Naive thymus-derived CD4-positive, alpha-beta T cell (primary cell): ENCODE measurements at regions of chr5 and their contacts with region 1.

Region 1: DNA sequence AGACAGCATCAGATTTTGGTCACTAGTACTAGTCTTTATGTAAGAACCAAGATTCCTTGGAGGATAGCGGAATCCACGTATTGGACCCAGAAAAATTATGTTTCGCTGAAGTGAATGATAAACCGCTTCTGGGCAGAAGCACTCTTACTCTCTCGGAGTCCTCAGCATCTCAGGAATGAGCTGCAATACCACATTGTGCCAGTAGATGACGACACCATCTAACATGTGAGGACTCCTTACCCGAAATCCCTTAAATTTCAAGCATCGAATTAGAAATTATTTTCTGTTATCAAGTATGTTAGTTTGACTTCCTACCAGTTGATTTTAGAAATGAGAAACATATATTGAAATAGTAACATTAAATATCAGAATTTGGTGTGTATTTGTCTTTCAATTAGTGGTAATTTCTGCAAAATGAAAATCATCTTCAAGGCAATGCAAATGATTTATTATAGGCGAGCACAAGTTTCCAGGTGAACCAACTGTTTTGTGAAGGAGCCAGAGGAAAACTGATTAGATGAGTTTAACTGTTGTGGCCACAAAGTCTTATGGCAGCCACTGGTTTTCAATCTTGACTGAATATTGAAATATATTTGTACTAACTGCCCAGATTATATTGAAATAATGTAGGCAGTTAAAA is 66.0 kb upstream of the CAMK4 start:
- DNase-seq: peak; percentile 46 to 79 (median 70)
- ATAC-seq: peak; percentile 91
- H3K4me3 ChIP-seq: no peak overlapping the region
- H3K4me3 Mint-ChIP-seq: no peak overlapping the region
- H3K27ac ChIP-seq: no peak overlapping the region
- H3K27ac Mint-ChIP-seq: no peak overlapping the region
- H3K4me1 ChIP-seq: no peaks in the 10 kb centered on the region
- H3K4me1 Mint-ChIP-seq: peaks cover 0 to 10% (median 0%) of the 10 kb centered on the region in 7 donors
- H3K27me3 ChIP-seq: no peaks in the 10 kb centered on the region
- H3K27me3 Mint-ChIP-seq: peaks cover 0 to 8% (median 0%) of the 10 kb centered on the region in 5 donors

Region 2: DNA sequence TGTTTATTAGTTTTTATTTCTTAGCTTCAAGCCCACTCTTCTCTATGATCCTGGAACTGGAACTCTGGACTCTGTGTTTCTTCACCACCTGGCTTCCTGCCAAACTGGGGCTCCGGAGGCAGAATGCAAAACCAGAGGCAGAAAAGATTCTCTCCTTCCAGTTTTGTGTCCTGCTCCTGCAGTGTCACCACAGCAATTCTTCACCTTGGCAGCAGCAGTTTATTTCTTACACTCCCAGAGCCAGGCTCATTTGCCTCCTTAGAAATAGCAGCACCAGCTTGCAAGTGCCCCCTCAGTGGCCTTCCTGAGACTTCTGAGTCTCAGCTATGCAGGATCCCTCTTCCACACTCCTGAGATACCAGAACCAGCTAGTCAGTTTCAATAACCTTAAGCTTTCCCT is 39.3 kb after region 1 on chr5:
- CTCF ChIA-PET with region 1: interaction called, 3 read pairs
- POLR2A ChIA-PET with region 1: no interaction called
- intact Hi-C with region 1: loop called in 1 of 2 experiments (anchors 5 kb)
- DNase-seq: no peak
- ATAC-seq: no peak
- H3K4me3 ChIP-seq: no peak overlapping the region
- H3K4me3 Mint-ChIP-seq: no peak overlapping the region
- H3K27ac ChIP-seq: no peak overlapping the region
- H3K27ac Mint-ChIP-seq: no peak overlapping the region
- H3K4me1 ChIP-seq: no peaks in the 10 kb centered on the region
- H3K4me1 Mint-ChIP-seq: peaks cover 0 to 13% (median 8%) of the 10 kb centered on the region in 7 donors
- H3K27me3 ChIP-seq: no peaks in the 10 kb centered on the region
- H3K27me3 Mint-ChIP-seq: peaks cover 0 to 30% (median 0%) of the 10 kb centered on the region in 5 donors

Region 3: GRCh38 chr5:111389390-111390082 is 231.3 kb after region 1 on chr5:
- CTCF ChIA-PET with region 1: no interaction called
- POLR2A ChIA-PET with region 1: no interaction called
- intact Hi-C with region 1: loop called in 1 of 2 experiments (anchors 5 kb)
- DNase-seq: no peak
- ATAC-seq: no peak
- H3K4me3 ChIP-seq: no peak overlapping the region
- H3K4me3 Mint-ChIP-seq: no peak overlapping the region
- H3K27ac ChIP-seq: no peak overlapping the region
- H3K27ac Mint-ChIP-seq: peak overlapping the region in 2 of 9 donors; percentile 2 to 9
- H3K4me1 ChIP-seq: peaks cover 0 to 3% of the 10 kb centered on the region in 2 donors
- H3K4me1 Mint-ChIP-seq: peaks cover 0 to 68% (median 38%) of the 10 kb centered on the region in 7 donors
- H3K27me3 ChIP-seq: no peaks in the 10 kb centered on the region
- H3K27me3 Mint-ChIP-seq: no peaks in the 10 kb centered on the region

Region 4: GRCh38 chr5:111512375-111513130 is 354.3 kb after region 1 on chr5 and contains the start of gene STARD4:
- CTCF ChIA-PET with region 1: interaction called, 5 read pairs
- POLR2A ChIA-PET with region 1: no interaction called
- intact Hi-C with region 1: loop called in 1 of 2 experiments (anchors 10 kb)
- DNase-seq: peak; percentile 79 to 94 (median 92)
- ATAC-seq: peak; percentile 97
- H3K4me3 ChIP-seq: peak within 1 kb of the TSS; percentile 81
- H3K4me3 Mint-ChIP-seq: peak within 1 kb of the TSS; percentile 91 to 100 (median 98)
- H3K27ac ChIP-seq: peak within 1 kb of the TSS; percentile 73
- H3K27ac Mint-ChIP-seq: peak within 1 kb of the TSS; percentile 90 to 98 (median 94)
- H3K4me1 ChIP-seq: peaks cover 0 to 14% of the 10 kb centered on the region in 2 donors
- H3K4me1 Mint-ChIP-seq: peaks cover 17 to 53% (median 28%) of the 10 kb centered on the region in 7 donors
- H3K27me3 ChIP-seq: no peaks in the 10 kb centered on the region
- H3K27me3 Mint-ChIP-seq: no peaks in the 10 kb centered on the region
- total RNA-seq, gene STARD4: 11.1 to 70.8 (median 17.1) TPM

Region 5: GRCh38 chr5:112146323-112147226 is 988.4 kb after region 1 on chr5:
- CTCF ChIA-PET with region 1: no interaction called
- POLR2A ChIA-PET with region 1: no interaction called
- intact Hi-C with region 1: loop called in 1 of 2 experiments (anchors 1 kb)
- DNase-seq: peak in 8 of 9 donors; percentile 32 to 75 (median 62)
- ATAC-seq: peak; percentile 97
- H3K4me3 ChIP-seq: no peak overlapping the region
- H3K4me3 Mint-ChIP-seq: no peak overlapping the region
- H3K27ac ChIP-seq: no peak overlapping the region
- H3K27ac Mint-ChIP-seq: no peak overlapping the region
- H3K4me1 ChIP-seq: no peaks in the 10 kb centered on the region
- H3K4me1 Mint-ChIP-seq: no peaks in the 10 kb centered on the region
- H3K27me3 ChIP-seq: peaks cover 0 to 3% of the 10 kb centered on the region in 2 donors
- H3K27me3 Mint-ChIP-seq: peaks cover 8 to 17% (median 9%) of the 10 kb centered on the region in 5 donors